ENCODE measurements at regions of chr15 and their contacts with region 1.

Region 1: DNA sequence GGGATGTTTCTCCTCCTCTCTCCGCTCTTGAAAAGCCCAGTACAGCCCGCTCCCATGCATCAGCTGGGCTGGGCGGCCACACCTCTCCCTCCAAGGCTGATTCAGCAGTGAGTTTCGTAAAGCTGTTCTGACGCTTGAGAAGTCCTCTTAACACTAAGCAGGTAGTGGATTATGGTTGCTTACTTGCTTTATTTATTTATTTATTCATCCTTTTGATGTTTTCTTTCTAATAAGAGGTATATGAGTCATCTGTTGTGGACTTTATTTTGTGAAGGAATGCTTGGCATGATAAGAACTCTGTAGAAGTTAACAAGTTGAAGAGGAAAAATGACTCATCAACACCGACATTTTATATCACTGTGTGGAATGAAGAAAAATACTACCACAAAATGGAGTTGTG is 285.0 kb downstream of the SQOR start:
- DNase-seq: peak in 1 of 2 experiments; percentile 24
- H3K4me3 ChIP-seq: no peak overlapping the region
- H3K4me3 Mint-ChIP-seq: no peak overlapping the region
- H3K27ac Mint-ChIP-seq: peak overlapping the region; percentile 65
- H3K4me1 ChIP-seq: peaks cover 22% of the 10 kb centered on the region
- H3K4me1 Mint-ChIP-seq: peaks cover 15% of the 10 kb centered on the region
- H3K27me3 ChIP-seq: no peaks in the 10 kb centered on the region
- H3K27me3 Mint-ChIP-seq: no peaks in the 10 kb centered on the region
- CTCF ChIP-seq: no peak

Region 2: GRCh38 chr15:45790325-45790943 is 129.4 kb before region 1 on chr15:
- CTCF ChIA-PET with region 1: no interaction called
- POLR2A ChIA-PET with region 1: no interaction called
- intact Hi-C with region 1: no loop called
- DNase-seq: peak in 1 of 2 experiments; percentile 53
- H3K4me3 ChIP-seq: no peak overlapping the region
- H3K4me3 Mint-ChIP-seq: no peak overlapping the region
- H3K27ac Mint-ChIP-seq: no peak overlapping the region
- H3K4me1 ChIP-seq: peaks cover 13% of the 10 kb centered on the region
- H3K4me1 Mint-ChIP-seq: no peaks in the 10 kb centered on the region
- H3K27me3 ChIP-seq: no peaks in the 10 kb centered on the region
- H3K27me3 Mint-ChIP-seq: no peaks in the 10 kb centered on the region
- CTCF ChIP-seq: peak; percentile 41 to 44

Region 3: GRCh38 chr15:45891766-45892165 is 28.0 kb before region 1 on chr15:
- CTCF ChIA-PET with region 1: no interaction called
- POLR2A ChIA-PET with region 1: interaction called, 10 read pairs
- intact Hi-C with region 1: no loop called
- DNase-seq: no peak
- H3K4me3 ChIP-seq: no peak overlapping the region
- H3K4me3 Mint-ChIP-seq: no peak overlapping the region
- H3K27ac Mint-ChIP-seq: no peak overlapping the region
- H3K4me1 ChIP-seq: no peaks in the 10 kb centered on the region
- H3K4me1 Mint-ChIP-seq: peaks cover 7% of the 10 kb centered on the region
- H3K27me3 ChIP-seq: no peaks in the 10 kb centered on the region
- H3K27me3 Mint-ChIP-seq: no peaks in the 10 kb centered on the region
- CTCF ChIP-seq: no peak

Region 4: GRCh38 chr15:45993508-45993907 is 73.7 kb after region 1 on chr15:
- CTCF ChIA-PET with region 1: no interaction called
- POLR2A ChIA-PET with region 1: no interaction called
- intact Hi-C with region 1: no loop called
- DNase-seq: no peak
- H3K4me3 ChIP-seq: no peak overlapping the region
- H3K4me3 Mint-ChIP-seq: no peak overlapping the region
- H3K27ac Mint-ChIP-seq: no peak overlapping the region
- H3K4me1 ChIP-seq: no peaks in the 10 kb centered on the region
- H3K4me1 Mint-ChIP-seq: no peaks in the 10 kb centered on the region
- H3K27me3 ChIP-seq: no peaks in the 10 kb centered on the region
- H3K27me3 Mint-ChIP-seq: no peaks in the 10 kb centered on the region
- CTCF ChIP-seq: no peak

Region 5: DNA sequence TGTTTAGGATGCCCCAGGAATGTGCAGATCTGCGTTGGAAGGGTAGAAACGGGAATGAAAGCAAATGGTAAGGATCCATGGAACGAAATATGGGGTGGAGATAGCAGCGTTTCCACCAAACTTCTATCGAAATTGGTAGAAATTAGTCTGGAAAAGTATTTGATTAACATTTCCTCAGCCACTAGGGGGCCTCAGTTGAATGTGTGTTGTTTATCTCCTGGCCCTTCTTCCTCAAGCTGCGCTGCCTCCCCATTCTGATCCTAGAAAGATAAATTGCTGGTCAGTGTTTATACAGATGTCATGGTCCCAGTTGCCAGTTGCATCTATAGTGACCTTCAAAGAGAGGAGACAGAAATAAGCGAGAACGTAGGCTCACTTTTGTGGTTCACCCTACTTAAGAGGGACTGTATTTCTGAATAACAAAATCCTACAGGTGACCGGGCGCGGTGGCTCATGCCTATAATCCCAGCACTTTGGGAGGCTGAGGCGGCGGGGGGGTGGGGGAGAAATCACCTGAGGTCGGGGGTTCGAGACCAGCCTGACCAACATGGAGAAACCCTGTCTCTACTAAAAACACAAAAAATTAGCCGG is 172.1 kb after region 1 on chr15:
- CTCF ChIA-PET with region 1: no interaction called
- POLR2A ChIA-PET with region 1: no interaction called
- intact Hi-C with region 1: no loop called
- DNase-seq: peak in 1 of 2 experiments; percentile 40
- H3K4me3 ChIP-seq: no peak overlapping the region
- H3K4me3 Mint-ChIP-seq: no peak overlapping the region
- H3K27ac Mint-ChIP-seq: no peak overlapping the region
- H3K4me1 ChIP-seq: no peaks in the 10 kb centered on the region
- H3K4me1 Mint-ChIP-seq: no peaks in the 10 kb centered on the region
- H3K27me3 ChIP-seq: no peaks in the 10 kb centered on the region
- H3K27me3 Mint-ChIP-seq: no peaks in the 10 kb centered on the region
- CTCF ChIP-seq: peak; percentile 37 to 53

Measured in Caco-2 (cell line).